Activated T-helper 1 cell treated with anti-CD3 and anti-CD28 coated beads, Interleukin-12 subunit alpha, Interleukin-12 subunit beta, Interleukin-2, Interleukin-4 antibody, amounts not matched to agents 30 ng/mL and 10 ng/mL and 1 ng/mL, durations not matched to agents 14 hours and 24 hours and 36 hours (primary cell): ENCODE measurements at regions of chr17 and their contacts with region 1.

Region 1: GRCh38 chr17:7687908-7688807 is at the start of gene WRAP53:
- DNase-seq: peak; percentile 94
- H3K4me3 Mint-ChIP-seq: peak within 1 kb of the TSS; percentile 95
- H3K27ac Mint-ChIP-seq: peak within 1 kb of the TSS; percentile 96
- H3K4me1 Mint-ChIP-seq: peaks cover 40% of the 10 kb centered on the region
- H3K27me3 Mint-ChIP-seq: no peaks in the 10 kb centered on the region
- total RNA-seq, gene WRAP53: 31.5 TPM in 2 replicates

Region 2: GRCh38 chr17:7252176-7253043 is 435.7 kb before region 1 on chr17 and contains the start of gene ELP5:
- intact Hi-C with region 1: loop called (anchors 2 kb)
- DNase-seq: peak; percentile 86
- H3K4me3 Mint-ChIP-seq: peak within 1 kb of the TSS; percentile 98
- H3K27ac Mint-ChIP-seq: peak within 1 kb of the TSS; percentile 99
- H3K4me1 Mint-ChIP-seq: peaks cover 42% of the 10 kb centered on the region
- H3K27me3 Mint-ChIP-seq: peaks cover 5% of the 10 kb centered on the region
- total RNA-seq, gene ELP5: 73.6 and 75.5 TPM in 2 replicates

Region 3: GRCh38 chr17:7435221-7435675 is 252.9 kb before region 1 on chr17 and contains the start of gene TMEM102:
- intact Hi-C with region 1: loop called (anchors 1 kb)
- DNase-seq: peak; percentile 97
- H3K4me3 Mint-ChIP-seq: peak within 1 kb of the TSS; percentile 91
- H3K27ac Mint-ChIP-seq: peak within 1 kb of the TSS; percentile 94
- H3K4me1 Mint-ChIP-seq: peaks cover 38% of the 10 kb centered on the region
- H3K27me3 Mint-ChIP-seq: peaks cover 5% of the 10 kb centered on the region
- total RNA-seq, gene TMEM102: 12.3 and 14.0 TPM in 2 replicates

Region 4: DNA sequence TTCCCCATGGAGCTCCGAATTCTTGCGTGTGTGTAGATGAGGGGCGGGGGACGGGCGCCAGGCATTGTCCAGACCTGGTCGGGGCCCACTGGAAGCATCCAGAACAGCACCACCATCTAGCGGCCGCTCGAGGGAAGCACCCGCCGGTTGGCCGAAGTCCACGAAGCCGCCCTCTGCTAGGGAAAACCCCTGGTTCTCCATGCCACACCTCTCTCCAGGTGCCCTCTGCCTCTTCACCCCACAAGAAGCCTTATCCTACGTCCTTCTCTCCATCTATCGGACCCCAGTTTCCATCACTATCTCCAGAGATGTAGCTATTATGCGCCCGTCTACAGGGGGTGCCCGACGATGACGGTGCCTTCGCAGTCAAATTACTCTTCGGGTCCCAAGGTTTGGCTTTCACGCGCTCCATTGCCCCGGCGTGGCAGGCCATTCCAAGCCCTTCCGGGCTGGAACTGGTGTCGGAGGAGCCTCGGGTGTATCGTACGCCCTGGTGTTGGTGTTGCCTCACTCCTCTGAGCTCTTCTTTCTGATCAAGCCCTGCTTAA is 127.1 kb before region 1 on chr17:
- intact Hi-C with region 1: loop called (anchors 1 kb)
- DNase-seq: peak; percentile 81
- H3K4me3 Mint-ChIP-seq: peak overlapping the region; percentile 97
- H3K27ac Mint-ChIP-seq: peak overlapping the region; percentile 92
- H3K4me1 Mint-ChIP-seq: peaks cover 56% of the 10 kb centered on the region
- H3K27me3 Mint-ChIP-seq: no peaks in the 10 kb centered on the region

Region 5: DNA sequence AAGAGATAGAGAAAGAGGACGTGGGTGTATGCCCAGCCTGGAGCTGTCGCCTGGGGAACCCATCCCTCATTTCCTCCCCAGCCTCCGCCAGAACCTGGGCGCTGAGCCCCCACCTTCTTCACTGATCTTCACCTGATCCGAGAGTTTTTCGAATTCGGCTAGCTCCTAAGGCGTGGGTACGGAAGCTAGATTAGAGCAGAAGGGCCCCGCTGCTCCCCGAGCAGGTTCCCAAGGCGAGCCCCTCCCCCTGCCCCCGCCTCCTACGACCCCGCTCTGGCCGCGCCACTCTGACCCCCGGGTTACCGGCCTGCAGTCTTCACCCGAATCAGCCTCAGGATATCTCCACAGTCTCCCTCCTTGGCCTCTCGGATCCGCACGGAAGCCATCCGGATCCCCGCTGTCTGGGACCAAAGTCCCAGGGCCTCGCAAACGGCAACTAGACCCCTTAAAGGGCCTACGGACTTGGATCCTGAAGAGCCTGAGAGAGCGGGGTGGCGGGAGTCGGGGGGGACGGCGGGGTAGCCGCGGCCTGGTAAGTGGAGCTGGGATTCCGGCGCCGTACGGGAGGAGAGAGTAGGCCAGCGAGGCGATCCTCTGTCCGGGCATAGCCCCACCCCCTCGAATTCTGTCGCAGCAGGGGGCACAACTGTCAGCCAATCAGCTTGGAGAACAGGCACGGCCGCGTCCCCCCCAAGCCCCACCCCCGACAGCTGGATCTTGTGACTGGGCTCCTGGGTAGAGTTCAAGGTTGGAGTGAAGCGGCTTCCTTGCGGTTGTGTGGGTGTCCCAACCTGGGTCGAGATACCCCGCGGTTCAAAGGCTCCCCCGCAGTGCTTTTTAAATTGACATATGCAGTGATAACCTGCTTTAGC is 60.7 kb before region 1 on chr17 and contains the start of gene SAT2:
- intact Hi-C with region 1: loop called (anchors 1 kb)
- DNase-seq: peak; percentile 77
- H3K4me3 Mint-ChIP-seq: peak within 1 kb of the TSS; percentile 89
- H3K27ac Mint-ChIP-seq: peak within 1 kb of the TSS; percentile 77
- H3K4me1 Mint-ChIP-seq: peaks cover 18% of the 10 kb centered on the region
- H3K27me3 Mint-ChIP-seq: no peaks in the 10 kb centered on the region
- total RNA-seq, gene SAT2: 23.8 and 24.0 TPM in 2 replicates

Region 6: DNA sequence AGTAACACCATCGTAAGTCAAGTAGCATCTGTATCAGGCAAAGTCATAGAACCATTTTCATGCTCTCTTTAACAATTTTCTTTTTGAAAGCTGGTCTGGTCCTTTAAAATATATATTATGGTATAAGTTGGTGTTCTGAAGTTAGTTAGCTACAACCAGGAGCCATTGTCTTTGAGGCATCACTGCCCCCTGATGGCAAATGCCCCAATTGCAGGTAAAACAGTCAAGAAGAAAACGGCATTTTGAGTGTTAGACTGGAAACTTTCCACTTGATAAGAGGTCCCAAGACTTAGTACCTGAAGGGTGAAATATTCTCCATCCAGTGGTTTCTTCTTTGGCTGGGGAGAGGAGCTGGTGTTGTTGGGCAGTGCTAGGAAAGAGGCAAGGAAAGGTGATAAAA is 14.9 kb before region 1 on chr17:
- intact Hi-C with region 1: no loop called
- DNase-seq: no peak
- H3K4me3 Mint-ChIP-seq: no peak overlapping the region
- H3K27ac Mint-ChIP-seq: no peak overlapping the region
- H3K4me1 Mint-ChIP-seq: peaks cover 5% of the 10 kb centered on the region
- H3K27me3 Mint-ChIP-seq: no peaks in the 10 kb centered on the region

Region 7: DNA sequence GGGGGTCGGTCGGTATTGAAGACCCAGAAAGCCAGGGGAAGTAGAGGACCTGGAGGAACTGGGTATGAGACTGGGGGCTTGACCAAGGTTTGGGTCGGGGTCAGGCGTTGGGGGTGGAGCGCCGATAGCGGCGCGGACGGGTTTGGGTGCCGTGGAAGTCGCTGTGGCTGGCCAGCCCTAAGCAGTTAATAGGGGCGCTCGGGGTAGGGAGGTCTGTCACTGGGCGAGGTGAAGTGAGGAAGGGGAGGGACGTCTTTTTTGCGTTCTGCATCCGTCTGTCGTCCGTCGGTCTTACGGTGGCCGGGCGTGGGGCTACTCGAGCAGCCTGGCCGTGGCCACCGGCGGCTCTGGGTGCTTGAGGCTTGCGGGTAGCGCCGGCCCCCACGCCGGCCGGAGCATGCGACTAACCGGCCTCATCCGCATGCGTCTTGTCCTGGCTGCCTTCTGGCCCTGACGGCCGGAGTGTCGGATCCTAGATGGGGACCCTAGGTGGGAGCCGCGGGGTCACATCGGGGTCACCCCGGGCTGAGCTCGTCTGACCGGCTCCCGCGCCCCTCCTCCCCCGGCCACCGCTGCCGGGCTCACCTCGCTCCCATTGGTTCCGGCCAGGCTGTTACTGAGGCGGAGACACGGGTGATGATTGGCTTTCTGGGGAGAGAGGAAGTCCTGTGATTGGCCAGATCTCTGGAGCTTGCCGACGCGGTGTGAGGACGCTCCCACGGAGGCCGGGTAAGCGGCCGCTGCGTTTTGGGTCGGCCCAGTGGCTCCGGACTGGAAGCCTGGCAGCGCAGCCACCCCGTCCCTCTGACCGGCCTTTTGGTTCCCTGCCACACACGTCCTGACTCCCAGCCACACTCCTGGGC is 156.4 kb after region 1 on chr17:
- intact Hi-C with region 1: loop called (anchors 2 kb)
- DNase-seq: peak; percentile 87
- H3K4me3 Mint-ChIP-seq: peak overlapping the region; percentile 89
- H3K27ac Mint-ChIP-seq: peak overlapping the region; percentile 96
- H3K4me1 Mint-ChIP-seq: peaks cover 37% of the 10 kb centered on the region
- H3K27me3 Mint-ChIP-seq: no peaks in the 10 kb centered on the region

Region 8: DNA sequence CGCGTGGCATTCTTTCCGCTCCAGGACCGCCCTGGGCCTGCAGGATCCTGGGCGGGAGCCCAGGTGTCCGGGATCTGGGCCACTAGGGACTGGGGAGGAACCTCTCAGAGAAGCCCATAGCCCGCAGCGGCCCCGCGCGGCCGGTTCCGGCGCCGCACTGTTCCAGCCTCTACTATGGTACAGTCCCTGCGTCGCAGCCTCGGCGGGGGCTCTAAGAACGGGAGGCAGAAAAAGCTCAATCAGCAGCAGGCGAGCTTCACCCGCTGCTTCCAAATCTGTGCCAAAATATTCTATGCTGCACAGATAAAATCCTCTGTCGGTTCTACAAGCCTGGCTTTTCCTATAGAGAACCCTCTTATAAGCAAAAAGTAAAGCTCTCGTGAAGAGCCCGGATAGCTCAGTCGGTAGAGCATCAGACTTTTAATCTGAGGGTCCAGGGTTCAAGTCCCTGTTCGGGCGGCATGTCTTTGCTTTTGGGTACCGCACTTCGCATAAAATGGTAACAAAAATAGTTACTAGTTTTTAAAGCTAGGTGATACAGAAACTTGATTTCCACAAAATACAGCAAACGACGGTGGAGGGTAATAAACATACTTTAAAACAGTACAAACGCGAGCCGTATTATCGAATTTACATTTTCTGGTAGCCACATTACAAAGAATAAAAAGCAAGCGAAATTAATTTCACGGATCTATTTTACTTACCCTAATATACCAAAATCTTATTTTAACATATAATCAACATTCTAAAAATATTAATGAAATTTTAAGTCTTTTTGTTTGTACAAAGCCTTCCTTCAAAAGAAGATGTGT is 430.8 kb after region 1 on chr17:
- intact Hi-C with region 1: loop called (anchors 2 kb)
- DNase-seq: peak; percentile 78
- H3K4me3 Mint-ChIP-seq: peak overlapping the region; percentile 91
- H3K27ac Mint-ChIP-seq: peak overlapping the region; percentile 97
- H3K4me1 Mint-ChIP-seq: peaks cover 46% of the 10 kb centered on the region
- H3K27me3 Mint-ChIP-seq: peaks cover 67% of the 10 kb centered on the region